ENCODE measurements at regions of chr16 and their contacts with region 1.

Region 1: GRCh38 chr16:27374804-27375425 is 27.1 kb upstream of the IL21R start:
- DNase-seq: peak; percentile 72
- H3K4me3 ChIP-seq: no peak overlapping the region
- H3K27ac ChIP-seq: no peak overlapping the region
- H3K4me1 ChIP-seq: 0 out of 2 replicates have a peak, but pooled peaks cover under 1% of the 10 kb centered on the region
- H3K27me3 ChIP-seq: no peaks in the 10 kb centered on the region

Region 2: DNA sequence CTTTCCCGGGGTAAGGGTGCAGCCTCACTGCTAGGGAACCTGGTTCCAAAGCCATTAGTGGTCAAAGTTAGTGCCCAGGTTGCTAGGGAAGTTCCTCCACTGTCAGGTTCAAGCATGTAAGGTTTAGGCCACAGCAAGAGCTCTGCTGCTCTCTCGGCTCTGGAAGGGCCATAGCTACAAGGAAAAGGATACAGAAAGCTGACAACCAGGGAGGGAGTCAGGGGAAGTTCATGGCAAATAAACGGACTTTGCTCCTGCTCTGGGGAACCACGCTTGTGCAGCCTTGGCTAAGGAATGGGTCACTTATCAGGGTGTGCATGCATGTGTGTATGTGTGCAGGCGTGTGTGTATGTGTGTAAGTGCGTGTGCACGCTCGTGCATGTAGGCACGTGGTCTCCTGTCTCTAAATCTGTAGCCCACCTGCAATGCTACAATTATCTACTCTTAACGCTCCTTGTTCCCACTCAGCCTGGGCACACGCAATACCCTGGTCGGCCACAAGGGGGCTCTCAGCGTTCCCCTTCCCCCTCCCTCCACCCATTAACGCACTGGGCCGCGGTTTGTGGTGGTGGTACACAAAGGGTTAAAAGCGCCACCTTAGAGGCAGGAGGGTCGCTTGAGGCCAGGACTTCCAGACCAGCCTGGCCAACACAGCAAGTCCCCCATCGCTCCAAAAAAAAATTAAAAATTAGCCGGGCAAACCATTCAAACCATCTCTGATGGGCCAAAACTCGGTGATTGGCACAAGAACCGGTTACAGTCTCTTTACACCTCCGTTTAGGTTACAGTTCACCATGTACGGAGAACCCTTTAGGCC is 220.0 kb before region 1 on chr16:
- in situ Hi-C with region 1: loop called (anchors 10 kb)
- DNase-seq: peak; percentile 48
- H3K4me3 ChIP-seq: peak overlapping the region; percentile 41
- H3K27ac ChIP-seq: no peak overlapping the region
- H3K4me1 ChIP-seq: no peaks in the 10 kb centered on the region
- H3K27me3 ChIP-seq: no peaks in the 10 kb centered on the region